Panc1 (cell line): ENCODE measurements at regions of chr12 and their contacts with region 1.

Region 1: GRCh38 chr12:121238604-121239350 is 28.8 kb downstream of the P2RX4 start:
- DNase-seq: no peak
- ATAC-seq: no peak
- H3K4me3 ChIP-seq: no peak overlapping the region
- H3K27ac ChIP-seq: no peak overlapping the region
- H3K4me1 ChIP-seq: no peaks in the 10 kb centered on the region
- H3K27me3 ChIP-seq: no peaks in the 10 kb centered on the region
- CTCF ChIP-seq: no peak

Region 2: GRCh38 chr12:121026274-121027045 is 212.3 kb before region 1 on chr12:
- CTCF ChIA-PET with region 1: interaction called, 11 read pairs
- POLR2A ChIA-PET with region 1: no interaction called
- in situ Hi-C with region 1: no loop called
- intact Hi-C with region 1: no loop called
- DNase-seq: no peak
- ATAC-seq: no peak
- H3K4me3 ChIP-seq: no peak overlapping the region
- H3K27ac ChIP-seq: no peak overlapping the region
- H3K4me1 ChIP-seq: no peaks in the 10 kb centered on the region
- H3K27me3 ChIP-seq: no peaks in the 10 kb centered on the region
- CTCF ChIP-seq: no peak

Region 3: DNA sequence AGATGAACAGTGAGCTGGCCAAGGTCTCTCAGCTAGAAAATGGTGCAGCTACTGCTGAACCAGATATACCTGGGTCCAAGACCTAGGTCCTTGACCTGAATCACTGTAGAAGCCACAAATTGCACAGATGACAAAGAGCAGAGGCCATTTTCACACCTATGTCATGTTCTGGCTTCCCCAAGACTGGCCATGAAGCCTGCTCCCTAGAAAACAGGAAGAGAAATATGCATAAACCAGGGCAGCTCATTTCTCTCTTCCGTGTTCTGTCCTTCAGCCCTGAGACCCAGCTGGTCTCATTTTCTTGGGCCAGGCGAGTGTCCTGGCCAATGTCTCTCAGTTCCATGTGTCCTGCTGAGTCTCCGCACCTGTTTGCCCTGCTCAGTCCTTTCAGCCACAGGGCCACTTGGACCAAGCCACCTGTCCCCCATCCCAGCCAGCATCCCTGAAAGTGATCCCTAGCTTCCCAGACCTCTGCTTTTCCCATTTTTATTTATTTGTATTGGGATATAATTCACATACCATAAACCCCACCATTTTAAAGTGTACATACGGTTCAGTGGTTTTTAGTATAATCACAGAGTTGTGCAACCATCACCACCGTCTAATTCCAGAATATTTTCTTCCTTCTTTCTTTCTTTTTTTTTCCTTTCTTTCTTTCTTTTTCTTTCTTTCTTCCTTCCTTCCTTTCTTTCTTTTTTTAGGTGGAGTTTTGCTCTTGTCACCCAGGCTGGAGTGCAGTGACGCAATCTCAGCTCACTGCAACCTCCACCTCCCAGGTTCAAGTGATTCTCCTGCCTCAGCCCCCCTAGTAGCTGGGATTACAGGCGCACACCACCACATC is 79.1 kb before region 1 on chr12:
- CTCF ChIA-PET with region 1: no interaction called
- POLR2A ChIA-PET with region 1: interaction called, 10 read pairs
- in situ Hi-C with region 1: no loop called
- intact Hi-C with region 1: no loop called
- DNase-seq: no peak
- ATAC-seq: no peak
- H3K4me3 ChIP-seq: no peak overlapping the region
- H3K27ac ChIP-seq: no peak overlapping the region
- H3K4me1 ChIP-seq: no peaks in the 10 kb centered on the region
- H3K27me3 ChIP-seq: 0 out of 2 replicates have a peak, but pooled peaks cover 2% of the 10 kb centered on the region
- CTCF ChIP-seq: no peak